ENCODE measurements at regions of chr18 and their contacts with region 1.

Region 1: GRCh38 chr18:9661564-9661963 is 46.5 kb upstream of the RAB31 start:
- DNase-seq: no peak
- H3K4me3 ChIP-seq: no peak overlapping the region
- CTCF ChIP-seq: no peak

Region 2: GRCh38 chr18:9575558-9575957 is 86.0 kb before region 1 on chr18:
- in situ Hi-C with region 1: loop called (anchors 5 kb)
- DNase-seq: peak; percentile 95
- H3K4me3 ChIP-seq: no peak overlapping the region
- CTCF ChIP-seq: peak; percentile 89

Region 3: GRCh38 chr18:9614401-9615279 is 46.9 kb before region 1 on chr18 and contains the start of gene PPP4R1:
- in situ Hi-C with region 1: loop called (anchors 5 kb)
- DNase-seq: no peak
- H3K4me3 ChIP-seq: peak within 1 kb of the TSS; percentile 79
- CTCF ChIP-seq: no peak

Measured in astrocyte of the cerebellum (primary cell).